Endothelial cell of umbilical vein (primary cell): ENCODE measurements at regions of chr10 and their contacts with region 1.

Region 1: GRCh38 chr10:93963434-93963833 is 30.3 kb upstream of the PLCE1 start:
- DNase-seq: no peak
- H3K4me3 ChIP-seq: no peak overlapping the region
- H3K27ac ChIP-seq: no peak overlapping the region
- H3K4me1 ChIP-seq: no peaks in the 10 kb centered on the region
- H3K27me3 ChIP-seq: no peaks in the 10 kb centered on the region
- CTCF ChIP-seq: no peak
- POLR2A ChIP-seq: no peak

Region 2: GRCh38 chr10:93977442-93977841 is 14.0 kb after region 1 on chr10:
- CTCF ChIA-PET with region 1: interaction called, 15 read pairs
- POLR2A ChIA-PET with region 1: no interaction called
- dilution Hi-C with region 1: no loop called
- intact Hi-C with region 1: no loop called
- DNase-seq: no peak
- H3K4me3 ChIP-seq: no peak overlapping the region
- H3K27ac ChIP-seq: no peak overlapping the region
- H3K4me1 ChIP-seq: no peaks in the 10 kb centered on the region
- H3K27me3 ChIP-seq: no peaks in the 10 kb centered on the region
- CTCF ChIP-seq: no peak
- POLR2A ChIP-seq: no peak

Region 3: GRCh38 chr10:94496010-94496409 is 532.6 kb after region 1 on chr10:
- CTCF ChIA-PET with region 1: no interaction called
- POLR2A ChIA-PET with region 1: no interaction called
- dilution Hi-C with region 1: no loop called
- intact Hi-C with region 1: no loop called
- DNase-seq: peak; percentile 10
- H3K4me3 ChIP-seq: no peak overlapping the region
- H3K27ac ChIP-seq: no peak overlapping the region
- H3K4me1 ChIP-seq: peaks cover 3% of the 10 kb centered on the region
- H3K27me3 ChIP-seq: no peaks in the 10 kb centered on the region
- CTCF ChIP-seq: no peak
- POLR2A ChIP-seq: no peak